HCT116 (cell line): ENCODE measurements at regions of chr2 and their contacts with region 1.

Region 1: GRCh38 chr2:222690564-222691200 is 19.2 kb downstream of the MOGAT1 start:
- DNase-seq: peak; percentile 77
- ATAC-seq: peak; percentile 93
- H3K4me3 ChIP-seq: no peak overlapping the region
- H3K27ac ChIP-seq: no peak overlapping the region
- H3K4me1 ChIP-seq: peaks cover 0 to 7% of the 10 kb centered on the region in 2 experiments; a peak in 2 of 4 replicates
- H3K27me3 ChIP-seq: no peaks in the 10 kb centered on the region
- CTCF ChIP-seq: peak; percentile 100
- POLR2A ChIP-seq: no peak
- RAD21 ChIP-seq: peak; percentile 82

Region 2: DNA sequence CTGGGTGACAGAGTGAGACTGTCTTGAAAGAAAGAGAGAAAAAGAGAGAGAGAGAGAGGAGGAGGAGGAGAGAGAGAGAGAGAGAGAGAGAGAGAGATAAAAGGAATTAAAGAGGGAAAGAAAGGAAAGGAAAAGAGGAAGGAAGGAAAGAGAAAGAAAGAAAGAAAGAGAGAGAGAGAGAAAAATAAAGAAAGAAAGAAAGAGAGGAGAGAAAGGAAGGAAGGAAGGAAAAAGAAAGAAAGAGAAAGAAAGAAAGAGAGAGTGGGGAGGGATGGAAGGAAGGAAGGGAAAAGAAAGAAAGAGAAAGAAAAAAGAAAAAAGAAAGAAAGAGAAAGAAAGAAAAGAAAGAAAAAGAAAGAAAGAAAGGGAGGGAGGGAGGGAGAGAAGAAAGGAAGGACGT is 10.6 kb after region 1 on chr2:
- CTCF ChIA-PET with region 1: interaction called, 16 read pairs
- POLR2A ChIA-PET with region 1: no interaction called
- RAD21 ChIA-PET with region 1: no interaction called
- intact Hi-C with region 1: no loop called
- DNase-seq: no peak
- ATAC-seq: no peak
- H3K4me3 ChIP-seq: no peak overlapping the region
- H3K27ac ChIP-seq: no peak overlapping the region
- H3K4me1 ChIP-seq: no peaks in the 10 kb centered on the region
- H3K27me3 ChIP-seq: no peaks in the 10 kb centered on the region
- CTCF ChIP-seq: no peak
- POLR2A ChIP-seq: no peak
- RAD21 ChIP-seq: no peak

Region 3: GRCh38 chr2:222912117-222912516 is 221.4 kb after region 1 on chr2:
- CTCF ChIA-PET with region 1: interaction called, 5 read pairs
- POLR2A ChIA-PET with region 1: no interaction called
- RAD21 ChIA-PET with region 1: no interaction called
- intact Hi-C with region 1: loop called (anchors 5 kb)
- DNase-seq: no peak
- ATAC-seq: no peak
- H3K4me3 ChIP-seq: no peak overlapping the region
- H3K27ac ChIP-seq: no peak overlapping the region
- H3K4me1 ChIP-seq: no peaks in the 10 kb centered on the region
- H3K27me3 ChIP-seq: no peaks in the 10 kb centered on the region
- CTCF ChIP-seq: no peak
- POLR2A ChIP-seq: no peak
- RAD21 ChIP-seq: no peak

Region 4: GRCh38 chr2:222939208-222939856 is 248.7 kb after region 1 on chr2:
- CTCF ChIA-PET with region 1: interaction called, 8 read pairs
- POLR2A ChIA-PET with region 1: no interaction called
- RAD21 ChIA-PET with region 1: no interaction called
- intact Hi-C with region 1: loop called (anchors 1 kb)
- DNase-seq: peak; percentile 56
- ATAC-seq: peak; percentile 98
- H3K4me3 ChIP-seq: no peak overlapping the region
- H3K27ac ChIP-seq: no peak overlapping the region
- H3K4me1 ChIP-seq: 0 out of 4 replicates have a peak, but pooled peaks cover 3 to 7% of the 10 kb centered on the region in 2 experiments
- H3K27me3 ChIP-seq: no peaks in the 10 kb centered on the region
- CTCF ChIP-seq: peak; percentile 85 to 98 (median 85)
- POLR2A ChIP-seq: no peak
- RAD21 ChIP-seq: peak; percentile 80